CD4-positive, alpha-beta T cell (primary cell): ENCODE measurements at regions of chr7 and their contacts with region 1.

Region 1: DNA sequence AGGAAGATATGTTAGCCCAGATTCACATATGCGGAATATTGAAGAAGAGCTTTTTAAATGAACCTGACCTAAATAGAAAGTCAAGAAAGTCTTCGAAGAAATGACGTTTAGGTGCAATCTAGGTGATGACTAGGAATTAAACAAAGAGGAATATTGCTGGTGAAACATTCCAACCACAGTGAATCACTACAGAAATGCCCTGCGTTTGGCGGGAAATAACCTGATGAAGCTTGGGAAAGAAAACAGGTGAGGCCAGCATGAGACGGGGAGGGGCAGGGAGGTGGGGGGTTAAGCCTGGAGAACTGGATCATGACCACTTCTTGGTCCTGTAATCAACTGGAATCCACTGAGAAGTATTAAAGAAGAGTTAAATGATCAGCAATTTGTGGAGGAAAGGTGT is 299.4 kb upstream of the VSTM2A start:
- DNase-seq: no peak
- ATAC-seq: no peak
- H3K4me3 ChIP-seq: no peak overlapping the region
- H3K4me3 Mint-ChIP-seq: no peak overlapping the region
- H3K27ac ChIP-seq: no peak overlapping the region
- H3K27ac Mint-ChIP-seq: no peak overlapping the region
- H3K4me1 ChIP-seq: no peaks in the 10 kb centered on the region
- H3K4me1 Mint-ChIP-seq: no peaks in the 10 kb centered on the region
- H3K27me3 ChIP-seq: no peaks in the 10 kb centered on the region
- H3K27me3 Mint-ChIP-seq: no peaks in the 10 kb centered on the region
- CTCF ChIP-seq: no peak

Region 2: GRCh38 chr7:54326592-54327167 is 83.9 kb after region 1 on chr7:
- CTCF ChIA-PET with region 1: no interaction called
- POLR2A ChIA-PET with region 1: no interaction called
- intact Hi-C with region 1: loop called (anchors 10 kb)
- DNase-seq: no peak
- ATAC-seq: no peak
- H3K4me3 ChIP-seq: no peak overlapping the region
- H3K4me3 Mint-ChIP-seq: no peak overlapping the region
- H3K27ac ChIP-seq: no peak overlapping the region
- H3K27ac Mint-ChIP-seq: no peak overlapping the region
- H3K4me1 ChIP-seq: no peaks in the 10 kb centered on the region
- H3K4me1 Mint-ChIP-seq: no peaks in the 10 kb centered on the region
- H3K27me3 ChIP-seq: no peaks in the 10 kb centered on the region
- H3K27me3 Mint-ChIP-seq: no peaks in the 10 kb centered on the region
- CTCF ChIP-seq: no peak

Region 3: DNA sequence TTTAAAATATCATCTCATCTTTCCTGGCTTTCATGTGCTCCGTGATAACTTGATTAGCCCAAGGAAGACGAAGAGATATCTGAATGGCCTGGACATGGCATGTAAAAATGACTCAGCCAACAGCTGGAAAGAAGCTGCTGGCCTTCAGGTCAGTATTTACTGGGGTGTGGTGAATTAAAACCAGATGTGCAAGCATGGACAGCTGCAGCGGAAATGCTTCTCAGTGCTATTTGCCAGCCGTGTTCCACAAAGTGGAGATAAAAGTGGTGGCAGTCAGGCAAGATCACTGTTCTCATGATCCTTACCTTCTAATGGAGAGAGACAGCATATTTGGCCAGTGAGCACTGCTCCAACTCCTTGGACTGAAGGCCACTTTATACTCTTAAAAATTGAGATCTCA is 96.3 kb after region 1 on chr7:
- CTCF ChIA-PET with region 1: no interaction called
- POLR2A ChIA-PET with region 1: no interaction called
- intact Hi-C with region 1: loop called in 1 of 2 experiments (anchors 10 kb)
- DNase-seq: no peak
- ATAC-seq: no peak
- H3K4me3 ChIP-seq: no peak overlapping the region
- H3K4me3 Mint-ChIP-seq: no peak overlapping the region
- H3K27ac ChIP-seq: no peak overlapping the region
- H3K27ac Mint-ChIP-seq: no peak overlapping the region
- H3K4me1 ChIP-seq: no peaks in the 10 kb centered on the region
- H3K4me1 Mint-ChIP-seq: no peaks in the 10 kb centered on the region
- H3K27me3 ChIP-seq: no peaks in the 10 kb centered on the region
- H3K27me3 Mint-ChIP-seq: no peaks in the 10 kb centered on the region
- CTCF ChIP-seq: no peak

Region 4: GRCh38 chr7:54354436-54354835 is 111.7 kb after region 1 on chr7:
- CTCF ChIA-PET with region 1: no interaction called
- POLR2A ChIA-PET with region 1: no interaction called
- intact Hi-C with region 1: no loop called
- DNase-seq: no peak
- ATAC-seq: no peak
- H3K4me3 ChIP-seq: no peak overlapping the region
- H3K4me3 Mint-ChIP-seq: no peak overlapping the region
- H3K27ac ChIP-seq: no peak overlapping the region
- H3K27ac Mint-ChIP-seq: no peak overlapping the region
- H3K4me1 ChIP-seq: no peaks in the 10 kb centered on the region
- H3K4me1 Mint-ChIP-seq: no peaks in the 10 kb centered on the region
- H3K27me3 ChIP-seq: no peaks in the 10 kb centered on the region
- H3K27me3 Mint-ChIP-seq: no peaks in the 10 kb centered on the region
- CTCF ChIP-seq: no peak